Endothelial cell of umbilical vein (primary cell): ENCODE measurements at regions of chr3 and their contacts with region 1.

Region 1: GRCh38 chr3:23888617-23889228 is 28.1 kb downstream of the NKIRAS1 start:
- DNase-seq: peak; percentile 79
- H3K4me3 ChIP-seq: no peak overlapping the region
- H3K27ac ChIP-seq: no peak overlapping the region
- H3K4me1 ChIP-seq: no peaks in the 10 kb centered on the region
- H3K27me3 ChIP-seq: no peaks in the 10 kb centered on the region
- CTCF ChIP-seq: peak; percentile 50 to 53
- POLR2A ChIP-seq: no peak

Region 2: GRCh38 chr3:23219117-23219516 is 669.6 kb before region 1 on chr3:
- CTCF ChIA-PET with region 1: no interaction called
- POLR2A ChIA-PET with region 1: no interaction called
- dilution Hi-C with region 1: no loop called
- intact Hi-C with region 1: no loop called
- DNase-seq: no peak
- H3K4me3 ChIP-seq: no peak overlapping the region
- H3K27ac ChIP-seq: no peak overlapping the region
- H3K4me1 ChIP-seq: no peaks in the 10 kb centered on the region
- H3K27me3 ChIP-seq: no peaks in the 10 kb centered on the region
- CTCF ChIP-seq: no peak
- POLR2A ChIP-seq: no peak

Region 3: DNA sequence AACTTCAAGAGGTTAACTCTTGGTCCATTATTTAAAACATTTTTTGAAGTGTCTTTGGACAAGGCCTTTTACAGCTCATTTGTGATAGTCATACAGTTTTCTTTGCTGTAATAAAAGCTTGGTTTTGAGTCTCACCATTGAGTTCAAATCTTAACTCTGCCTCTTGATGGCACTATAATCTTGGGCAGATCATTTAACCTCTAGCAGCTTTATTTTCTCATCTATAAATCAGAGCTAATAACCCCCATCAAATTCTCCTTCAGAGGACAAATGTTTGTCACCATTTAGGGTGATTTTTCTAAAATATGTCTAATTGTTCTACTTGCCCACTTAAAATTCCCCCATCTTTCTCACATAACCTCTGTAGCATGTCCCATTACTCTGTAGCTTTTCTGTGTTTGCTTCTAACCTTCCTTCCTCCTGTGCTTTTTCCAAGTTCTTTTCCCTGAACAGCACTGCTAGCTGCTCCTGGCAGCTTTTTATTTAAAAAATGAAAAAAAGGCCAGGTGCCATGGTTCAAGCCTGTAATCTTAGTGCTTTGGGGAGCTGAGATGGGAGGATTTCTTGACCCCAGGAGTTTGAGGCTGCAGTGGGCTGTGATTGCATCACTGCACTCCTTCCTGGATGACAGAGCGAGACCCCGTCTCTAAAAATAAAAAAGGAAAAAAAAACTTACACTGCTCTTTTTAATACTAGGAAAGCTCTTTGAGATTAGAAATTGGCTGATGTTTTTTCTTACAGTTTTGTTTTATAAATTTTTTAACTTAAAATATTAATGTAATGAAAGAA is 54.4 kb before region 1 on chr3:
- CTCF ChIA-PET with region 1: interaction called, 49 read pairs
- POLR2A ChIA-PET with region 1: no interaction called
- dilution Hi-C with region 1: no loop called
- intact Hi-C with region 1: no loop called
- DNase-seq: peak; percentile 45
- H3K4me3 ChIP-seq: no peak overlapping the region
- H3K27ac ChIP-seq: no peak overlapping the region
- H3K4me1 ChIP-seq: no peaks in the 10 kb centered on the region
- H3K27me3 ChIP-seq: no peaks in the 10 kb centered on the region
- CTCF ChIP-seq: no peak
- POLR2A ChIP-seq: no peak

Region 4: GRCh38 chr3:23865595-23866450 is 22.9 kb before region 1 on chr3:
- CTCF ChIA-PET with region 1: interaction called, 15 read pairs
- POLR2A ChIA-PET with region 1: no interaction called
- dilution Hi-C with region 1: no loop called
- intact Hi-C with region 1: no loop called
- DNase-seq: peak; percentile 87
- H3K4me3 ChIP-seq: no peak overlapping the region
- H3K27ac ChIP-seq: peak overlapping the region; percentile 4
- H3K4me1 ChIP-seq: peaks cover 48% of the 10 kb centered on the region
- H3K27me3 ChIP-seq: no peaks in the 10 kb centered on the region
- CTCF ChIP-seq: no peak
- POLR2A ChIP-seq: no peak

Region 5: DNA sequence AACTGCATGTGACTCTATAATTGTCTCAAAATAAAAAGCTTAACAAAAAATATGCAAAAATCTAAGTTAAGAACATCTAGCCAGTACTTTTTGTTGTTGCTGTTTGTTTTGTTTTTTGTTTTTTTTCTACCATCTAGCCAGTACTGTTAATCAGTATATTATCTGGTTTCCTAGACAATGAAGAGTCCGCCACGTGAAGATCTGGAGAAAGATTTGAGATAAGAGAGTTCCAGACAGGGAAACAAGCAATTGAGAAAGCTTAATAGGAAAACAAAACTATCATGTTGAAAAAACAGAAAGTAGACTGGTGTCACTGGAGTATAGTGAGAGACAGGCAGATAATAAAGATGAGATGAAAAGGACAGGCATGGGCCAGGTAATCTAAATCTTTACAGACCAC is 10.6 kb after region 1 on chr3:
- CTCF ChIA-PET with region 1: interaction called, 19 read pairs
- POLR2A ChIA-PET with region 1: interaction called, 3 read pairs
- dilution Hi-C with region 1: no loop called
- intact Hi-C with region 1: no loop called
- DNase-seq: no peak
- H3K4me3 ChIP-seq: no peak overlapping the region
- H3K27ac ChIP-seq: no peak overlapping the region
- H3K4me1 ChIP-seq: no peaks in the 10 kb centered on the region
- H3K27me3 ChIP-seq: no peaks in the 10 kb centered on the region
- CTCF ChIP-seq: no peak
- POLR2A ChIP-seq: no peak

Region 6: GRCh38 chr3:23923786-23924185 is 35.1 kb after region 1 on chr3:
- CTCF ChIA-PET with region 1: interaction called, 12 read pairs
- POLR2A ChIA-PET with region 1: no interaction called
- dilution Hi-C with region 1: no loop called
- intact Hi-C with region 1: no loop called
- DNase-seq: peak; percentile 84
- H3K4me3 ChIP-seq: no peak overlapping the region
- H3K27ac ChIP-seq: no peak overlapping the region
- H3K4me1 ChIP-seq: peaks cover 4% of the 10 kb centered on the region
- H3K27me3 ChIP-seq: no peaks in the 10 kb centered on the region
- CTCF ChIP-seq: no peak
- POLR2A ChIP-seq: no peak

Region 7: GRCh38 chr3:23991683-23992628 is 103.2 kb after region 1 on chr3:
- CTCF ChIA-PET with region 1: interaction called, 16 read pairs
- POLR2A ChIA-PET with region 1: no interaction called
- dilution Hi-C with region 1: no loop called
- intact Hi-C with region 1: no loop called
- DNase-seq: peak; percentile 98
- H3K4me3 ChIP-seq: no peak overlapping the region
- H3K27ac ChIP-seq: peak overlapping the region; percentile 65
- H3K4me1 ChIP-seq: peaks cover 21% of the 10 kb centered on the region
- H3K27me3 ChIP-seq: no peaks in the 10 kb centered on the region
- CTCF ChIP-seq: no peak
- POLR2A ChIP-seq: no peak

Region 8: DNA sequence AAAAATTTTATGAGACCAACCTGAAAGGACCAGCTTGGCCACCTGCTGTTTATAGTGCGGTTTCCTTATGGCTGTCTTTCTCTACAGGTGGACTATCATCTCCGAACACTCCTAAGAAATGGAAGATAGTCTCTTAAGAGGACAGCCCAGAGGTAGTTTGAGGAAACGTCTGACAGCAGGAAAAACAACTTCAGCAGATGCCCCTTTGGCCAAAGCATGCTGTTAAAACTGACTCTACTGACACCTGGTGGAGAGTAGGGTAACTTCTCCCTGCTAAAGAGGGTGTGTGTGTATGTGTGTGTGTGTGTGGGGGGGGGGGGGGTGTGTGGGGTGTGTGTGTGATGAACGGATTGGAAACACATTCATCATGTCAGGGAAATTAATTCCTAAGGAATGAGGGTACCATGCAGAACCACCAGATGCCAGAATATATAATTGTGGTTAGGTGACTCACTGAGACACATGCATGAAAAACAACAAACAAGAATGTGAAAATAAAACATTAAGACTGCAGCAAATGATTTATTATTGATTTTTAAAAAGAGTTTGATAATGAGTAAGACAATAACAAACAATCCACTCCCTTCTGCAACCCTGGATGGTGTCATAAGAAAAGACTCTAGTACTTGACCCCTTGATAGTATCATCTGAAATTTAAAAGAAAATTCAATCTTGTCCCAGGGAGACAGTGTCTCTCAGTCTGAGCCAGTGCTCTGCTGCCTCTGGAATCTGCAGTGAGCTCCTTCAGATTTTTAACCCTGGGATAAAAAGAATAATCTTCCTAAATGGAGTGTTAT is 349.4 kb after region 1 on chr3:
- CTCF ChIA-PET with region 1: interaction called, 10 read pairs
- POLR2A ChIA-PET with region 1: no interaction called
- dilution Hi-C with region 1: no loop called
- intact Hi-C with region 1: loop called (anchors 1 kb)
- DNase-seq: peak; percentile 78
- H3K4me3 ChIP-seq: no peak overlapping the region
- H3K27ac ChIP-seq: no peak overlapping the region
- H3K4me1 ChIP-seq: peaks cover 23% of the 10 kb centered on the region
- H3K27me3 ChIP-seq: no peaks in the 10 kb centered on the region
- CTCF ChIP-seq: peak; percentile 55 to 75
- POLR2A ChIP-seq: no peak